ENCODE measurements at regions of chr6 and their contacts with region 1.

Region 1: GRCh38 chr6:50330963-50331362 is 281.2 kb upstream of the DEFB112 start:
- DNase-seq: no peak
- ATAC-seq: no peak
- H3K4me3 ChIP-seq: no peak overlapping the region
- H3K27ac ChIP-seq: no peak overlapping the region
- H3K4me1 ChIP-seq: no peaks in the 10 kb centered on the region
- H3K27me3 ChIP-seq: no peaks in the 10 kb centered on the region
- CTCF ChIP-seq: no peak

Region 2: DNA sequence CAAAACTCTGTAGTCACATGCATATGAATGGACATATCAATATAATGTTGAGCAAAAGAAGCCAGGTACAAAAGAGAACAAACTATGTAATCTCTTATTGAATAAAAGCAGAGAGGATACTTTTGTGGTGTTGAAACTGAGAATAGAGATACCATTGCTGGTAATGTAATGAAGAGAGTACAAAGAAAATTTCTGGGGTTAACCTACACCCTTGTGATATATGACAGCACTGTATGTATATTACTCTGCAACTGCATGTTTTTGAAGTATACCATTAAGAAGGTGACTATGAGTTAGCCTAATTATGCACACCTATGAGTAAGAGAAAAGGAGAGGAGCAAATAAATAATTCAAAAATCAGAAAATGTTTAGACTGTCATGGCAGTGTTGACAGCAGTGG is 12.4 kb before region 1 on chr6:
- intact Hi-C with region 1: loop called in 1 of 10 experiments (anchors 1 kb)
- DNase-seq: no peak
- ATAC-seq: no peak
- H3K4me3 ChIP-seq: no peak overlapping the region
- H3K27ac ChIP-seq: no peak overlapping the region
- H3K4me1 ChIP-seq: no peaks in the 10 kb centered on the region
- H3K27me3 ChIP-seq: no peaks in the 10 kb centered on the region
- CTCF ChIP-seq: no peak

Region 3: DNA sequence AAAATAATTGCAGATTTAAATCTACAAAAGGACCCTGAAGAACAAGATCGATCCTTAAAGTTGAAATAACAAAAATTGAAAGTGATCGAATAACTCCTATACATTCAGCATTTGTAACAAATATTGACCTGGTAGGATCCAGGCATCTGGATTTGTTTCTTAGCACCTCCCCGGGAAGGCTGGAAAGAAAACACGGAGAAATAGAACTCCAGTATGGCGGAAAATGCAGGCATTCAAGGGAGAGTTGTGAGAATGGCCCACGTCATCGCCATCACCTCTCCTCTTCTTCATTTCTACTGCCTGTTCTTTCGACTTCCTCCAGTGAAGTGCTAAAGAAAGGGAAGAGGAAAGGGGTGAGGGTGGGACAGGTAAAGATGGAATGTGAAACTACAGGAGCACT is 140.1 kb after region 1 on chr6:
- intact Hi-C with region 1: no loop called
- DNase-seq: no peak
- ATAC-seq: no peak
- H3K4me3 ChIP-seq: no peak overlapping the region
- H3K27ac ChIP-seq: no peak overlapping the region
- H3K4me1 ChIP-seq: no peaks in the 10 kb centered on the region
- H3K27me3 ChIP-seq: no peaks in the 10 kb centered on the region
- CTCF ChIP-seq: no peak